Endothelial cell of umbilical vein (primary cell): ENCODE measurements at regions of chr13 and their contacts with region 1.

Region 1: GRCh38 chr13:99087096-99087953 is 109.5 kb upstream of the DOCK9 start:
- DNase-seq: peak; percentile 88
- H3K4me3 ChIP-seq: peak overlapping the region; percentile 61 to 65 (median 63)
- H3K27ac ChIP-seq: peak overlapping the region; percentile 20
- H3K4me1 ChIP-seq: peaks cover 19% of the 10 kb centered on the region
- H3K27me3 ChIP-seq: no peaks in the 10 kb centered on the region
- CTCF ChIP-seq: peak in 1 of 2 donors; percentile 45
- POLR2A ChIP-seq: no peak

Region 2: GRCh38 chr13:99062593-99062992 is 24.7 kb before region 1 on chr13:
- CTCF ChIA-PET with region 1: no interaction called
- POLR2A ChIA-PET with region 1: no interaction called
- dilution Hi-C with region 1: no loop called
- intact Hi-C with region 1: loop called (anchors 2 kb)
- DNase-seq: peak; percentile 96
- H3K4me3 ChIP-seq: peak overlapping the region in 1 of 3 experiments; percentile 46
- H3K27ac ChIP-seq: peak overlapping the region; percentile 59
- H3K4me1 ChIP-seq: peaks cover 38% of the 10 kb centered on the region
- H3K27me3 ChIP-seq: no peaks in the 10 kb centered on the region
- CTCF ChIP-seq: no peak
- POLR2A ChIP-seq: no peak

Region 3: DNA sequence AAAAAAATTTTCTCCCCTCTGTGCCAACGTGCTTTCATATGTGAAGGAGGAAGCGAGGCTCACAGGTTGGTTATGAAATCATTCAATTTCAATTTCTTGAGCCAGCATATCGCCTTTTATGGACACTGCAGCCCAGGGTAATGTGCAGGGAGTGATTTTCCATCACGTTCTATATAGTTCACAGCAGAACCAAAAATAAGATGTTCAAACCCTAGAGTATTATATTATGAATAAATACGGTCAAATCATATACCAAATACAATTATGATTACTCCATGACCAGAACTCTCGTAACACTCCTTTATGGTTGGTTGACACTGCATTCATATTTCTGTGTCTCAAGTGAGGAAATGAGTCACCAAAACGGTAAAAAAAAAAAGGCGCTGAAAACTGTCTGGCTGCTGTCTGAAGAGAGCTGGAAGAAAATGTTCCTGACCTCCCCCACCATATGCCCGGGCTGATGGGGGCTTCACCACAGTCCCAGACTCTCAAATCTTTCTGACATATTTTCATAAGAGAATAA is 37.5 kb after region 1 on chr13:
- CTCF ChIA-PET with region 1: no interaction called
- POLR2A ChIA-PET with region 1: no interaction called
- dilution Hi-C with region 1: no loop called
- intact Hi-C with region 1: loop called (anchors 2 kb)
- DNase-seq: peak; percentile 86
- H3K4me3 ChIP-seq: peak overlapping the region in 1 of 3 experiments; percentile 14
- H3K27ac ChIP-seq: peak overlapping the region; percentile 72
- H3K4me1 ChIP-seq: peaks cover 10% of the 10 kb centered on the region
- H3K27me3 ChIP-seq: peaks cover 2 to 3% of the 10 kb centered on the region in 2 experiments
- CTCF ChIP-seq: no peak
- POLR2A ChIP-seq: no peak

Region 4: GRCh38 chr13:99151516-99151915 is 64.2 kb after region 1 on chr13:
- CTCF ChIA-PET with region 1: no interaction called
- POLR2A ChIA-PET with region 1: no interaction called
- dilution Hi-C with region 1: no loop called
- intact Hi-C with region 1: no loop called
- DNase-seq: no peak
- H3K4me3 ChIP-seq: no peak overlapping the region
- H3K27ac ChIP-seq: no peak overlapping the region
- H3K4me1 ChIP-seq: no peaks in the 10 kb centered on the region
- H3K27me3 ChIP-seq: peaks cover 2% of the 10 kb centered on the region in 2 experiments
- CTCF ChIP-seq: no peak
- POLR2A ChIP-seq: no peak

Region 5: GRCh38 chr13:100019780-100020356 is 932.5 kb after region 1 on chr13:
- CTCF ChIA-PET with region 1: no interaction called
- POLR2A ChIA-PET with region 1: no interaction called
- dilution Hi-C with region 1: no loop called
- intact Hi-C with region 1: no loop called
- DNase-seq: no peak
- H3K4me3 ChIP-seq: no peak overlapping the region
- H3K27ac ChIP-seq: no peak overlapping the region
- H3K4me1 ChIP-seq: no peaks in the 10 kb centered on the region
- H3K27me3 ChIP-seq: no peaks in the 10 kb centered on the region
- CTCF ChIP-seq: no peak
- POLR2A ChIP-seq: no peak